ENCODE measurements at regions of chr12 and their contacts with region 1.

Region 1: GRCh38 chr12:122471324-122472226 is 29.2 kb downstream of the ZCCHC8 start:
- DNase-seq: peak; percentile 16
- H3K4me3 ChIP-seq: no peak overlapping the region
- H3K27ac ChIP-seq: peak overlapping the region; percentile 70 to 75
- H3K4me1 ChIP-seq: no peaks in the 10 kb centered on the region
- H3K27me3 ChIP-seq: no peaks in the 10 kb centered on the region
- CTCF ChIP-seq: peak; percentile 45 to 91 (median 84)
- POLR2A ChIP-seq: no peak

Region 2: DNA sequence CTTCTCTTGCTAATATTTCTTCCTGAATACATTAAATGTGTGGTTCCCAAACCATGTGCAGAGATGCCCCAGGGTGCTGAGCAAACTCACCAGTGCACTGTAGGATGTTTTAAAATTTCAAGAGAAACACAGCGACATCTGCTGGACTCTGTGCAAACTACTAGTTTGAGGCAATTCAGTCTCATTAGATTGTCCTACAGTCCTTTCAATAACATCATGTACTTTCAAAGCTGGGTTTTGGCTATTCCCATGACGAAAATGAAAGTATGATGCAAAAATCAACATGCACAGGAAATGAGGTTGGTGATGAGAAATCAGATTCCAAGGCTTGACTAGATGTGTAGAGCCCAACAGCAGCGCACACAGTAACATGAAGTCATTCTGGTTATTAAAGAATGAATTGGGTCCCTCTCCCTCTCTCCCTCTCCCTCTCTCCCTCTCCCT is 115.4 kb before region 1 on chr12:
- intact Hi-C with region 1: loop called (anchors 10 kb)
- DNase-seq: peak; percentile 19
- H3K4me3 ChIP-seq: no peak overlapping the region
- H3K27ac ChIP-seq: no peak overlapping the region
- H3K4me1 ChIP-seq: no peaks in the 10 kb centered on the region
- H3K27me3 ChIP-seq: no peaks in the 10 kb centered on the region
- CTCF ChIP-seq: peak; percentile 19 to 64 (median 60)
- POLR2A ChIP-seq: no peak

Region 3: GRCh38 chr12:122399592-122400373 is 71.8 kb before region 1 on chr12:
- intact Hi-C with region 1: loop called (anchors 2 kb)
- DNase-seq: peak; percentile 88
- H3K4me3 ChIP-seq: no peak overlapping the region
- H3K27ac ChIP-seq: peak overlapping the region; percentile 86 to 88
- H3K4me1 ChIP-seq: peaks cover 11% of the 10 kb centered on the region
- H3K27me3 ChIP-seq: no peaks in the 10 kb centered on the region
- CTCF ChIP-seq: peak in 3 of 4 experiments; percentile 68 to 83 (median 73)
- POLR2A ChIP-seq: peak; percentile 26